Dorsolateral prefrontal cortex (tissue), 120 donors: ENCODE measurements at regions of chr11 and their contacts with region 1.

Region 1: GRCh38 chr11:36398231-36398953 is 102.3 kb downstream of the PRR5L start:
- DNase-seq: peak in 8 of 10 donors; percentile 38 to 74 (median 60)
- H3K4me3 ChIP-seq: peak overlapping the region in 28 of 59 donors; percentile 6 to 52 (median 24)
- H3K27ac ChIP-seq: peak overlapping the region in 58 of 59 donors; percentile 16 to 98 (median 90)
- H3K27me3 ChIP-seq: no peaks in the 10 kb centered on the region
- CTCF ChIP-seq: peak in 2 of 56 donors; percentile 4 to 37

Region 2: DNA sequence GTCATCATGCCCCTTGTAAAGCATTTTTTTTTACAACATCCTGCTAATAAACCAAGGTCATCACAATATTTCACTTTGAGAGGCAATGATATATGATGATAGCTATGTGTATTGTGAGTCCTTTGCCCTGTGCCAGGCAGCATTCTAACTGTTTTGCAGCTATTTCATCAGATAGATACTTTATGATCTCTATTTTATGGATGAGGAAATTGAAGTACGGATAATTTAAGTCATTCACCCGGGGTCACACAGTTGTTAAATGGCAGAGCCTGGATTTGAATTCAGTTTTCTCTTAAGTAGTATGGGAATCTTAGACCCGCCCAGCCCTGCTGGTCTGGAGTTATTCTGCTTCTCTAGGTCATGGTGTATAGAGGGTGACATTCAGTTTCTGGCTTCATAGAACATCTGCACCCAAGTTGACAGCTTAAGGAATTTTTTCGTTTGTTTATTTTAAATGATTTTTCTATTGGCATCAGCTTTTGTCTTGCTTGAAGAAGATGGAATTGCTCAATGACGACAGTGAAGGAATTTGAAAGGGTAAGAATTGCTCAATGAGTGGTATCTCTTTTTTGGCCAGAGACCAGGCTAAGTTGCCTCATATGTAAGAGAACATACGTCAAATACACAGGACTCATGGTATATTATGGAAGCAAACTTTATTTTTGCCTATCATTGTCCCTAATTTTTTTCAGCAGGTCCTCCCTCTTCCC is 101.3 kb before region 1 on chr11:
- intact Hi-C with region 1: loop called in 1 of 2 experiments (anchors 2 kb)
- DNase-seq: no peak
- H3K4me3 ChIP-seq: peak overlapping the region in 58 of 59 donors; percentile 1 to 79 (median 48)
- H3K27ac ChIP-seq: peak overlapping the region in 57 of 59 donors; percentile 28 to 99 (median 93)
- H3K27me3 ChIP-seq: no peaks in the 10 kb centered on the region
- CTCF ChIP-seq: no peak

Region 3: DNA sequence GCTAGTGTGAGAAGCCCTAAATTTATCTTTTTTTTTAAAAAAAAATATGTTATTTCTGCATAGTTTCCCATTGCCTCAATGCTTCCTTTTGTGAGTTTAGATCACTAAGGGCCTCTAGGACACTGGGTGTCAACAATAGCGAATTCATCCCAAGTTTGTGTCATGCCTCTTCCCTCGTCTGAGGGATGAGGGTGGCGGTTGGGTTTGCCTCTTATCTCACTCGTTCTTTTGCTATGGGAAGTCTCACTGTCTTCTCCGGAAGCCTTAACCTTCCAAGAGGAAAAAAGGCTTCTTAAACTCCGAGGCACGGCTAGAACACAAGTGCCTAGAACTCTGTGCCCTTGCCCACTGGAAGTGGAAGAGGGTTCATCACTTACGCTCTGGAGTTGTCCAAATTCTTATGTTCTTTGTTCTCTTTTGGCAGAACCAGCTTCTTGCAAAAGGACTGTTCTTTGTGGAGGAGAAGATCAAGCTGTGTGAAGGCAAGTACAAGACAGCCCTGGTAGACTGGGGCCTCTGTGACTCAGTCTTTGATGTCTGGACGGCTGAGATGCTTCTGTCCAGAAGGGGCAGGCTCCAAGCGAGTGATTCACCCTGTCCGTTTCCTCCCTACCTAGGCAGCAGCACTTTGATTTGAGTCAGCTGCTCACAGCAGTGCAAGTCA is 33.2 kb after region 1 on chr11:
- intact Hi-C with region 1: loop called in 1 of 2 experiments (anchors 5 kb)
- DNase-seq: no peak
- H3K4me3 ChIP-seq: peak overlapping the region in 9 of 59 donors; percentile 0 to 31 (median 4)
- H3K27ac ChIP-seq: peak overlapping the region in 52 of 59 donors; percentile 1 to 88 (median 64)
- H3K27me3 ChIP-seq: no peaks in the 10 kb centered on the region
- CTCF ChIP-seq: peak in 1 of 56 donors; percentile 16

Region 4: GRCh38 chr11:36683818-36684217 is 285.4 kb after region 1 on chr11:
- intact Hi-C with region 1: no loop called
- DNase-seq: no peak
- H3K4me3 ChIP-seq: no peak overlapping the region
- H3K27ac ChIP-seq: no peak overlapping the region
- H3K27me3 ChIP-seq: peaks cover 0 to 6% (median 0%) of the 10 kb centered on the region in 45 donors
- CTCF ChIP-seq: no peak